Activated naive CD4-positive, alpha-beta T cell treated with anti-CD3 and anti-CD28 coated beads for 36 hours (primary cell): ENCODE measurements at regions of chr11 and their contacts with region 1.

Region 1: GRCh38 chr11:76807206-76807875 is 24.2 kb downstream of the TSKU start:
- DNase-seq: peak; percentile 86
- H3K4me3 Mint-ChIP-seq: no peak overlapping the region
- H3K27ac Mint-ChIP-seq: no peak overlapping the region
- H3K4me1 Mint-ChIP-seq: peaks cover 26% of the 10 kb centered on the region
- H3K27me3 Mint-ChIP-seq: peaks cover 7% of the 10 kb centered on the region

Region 2: DNA sequence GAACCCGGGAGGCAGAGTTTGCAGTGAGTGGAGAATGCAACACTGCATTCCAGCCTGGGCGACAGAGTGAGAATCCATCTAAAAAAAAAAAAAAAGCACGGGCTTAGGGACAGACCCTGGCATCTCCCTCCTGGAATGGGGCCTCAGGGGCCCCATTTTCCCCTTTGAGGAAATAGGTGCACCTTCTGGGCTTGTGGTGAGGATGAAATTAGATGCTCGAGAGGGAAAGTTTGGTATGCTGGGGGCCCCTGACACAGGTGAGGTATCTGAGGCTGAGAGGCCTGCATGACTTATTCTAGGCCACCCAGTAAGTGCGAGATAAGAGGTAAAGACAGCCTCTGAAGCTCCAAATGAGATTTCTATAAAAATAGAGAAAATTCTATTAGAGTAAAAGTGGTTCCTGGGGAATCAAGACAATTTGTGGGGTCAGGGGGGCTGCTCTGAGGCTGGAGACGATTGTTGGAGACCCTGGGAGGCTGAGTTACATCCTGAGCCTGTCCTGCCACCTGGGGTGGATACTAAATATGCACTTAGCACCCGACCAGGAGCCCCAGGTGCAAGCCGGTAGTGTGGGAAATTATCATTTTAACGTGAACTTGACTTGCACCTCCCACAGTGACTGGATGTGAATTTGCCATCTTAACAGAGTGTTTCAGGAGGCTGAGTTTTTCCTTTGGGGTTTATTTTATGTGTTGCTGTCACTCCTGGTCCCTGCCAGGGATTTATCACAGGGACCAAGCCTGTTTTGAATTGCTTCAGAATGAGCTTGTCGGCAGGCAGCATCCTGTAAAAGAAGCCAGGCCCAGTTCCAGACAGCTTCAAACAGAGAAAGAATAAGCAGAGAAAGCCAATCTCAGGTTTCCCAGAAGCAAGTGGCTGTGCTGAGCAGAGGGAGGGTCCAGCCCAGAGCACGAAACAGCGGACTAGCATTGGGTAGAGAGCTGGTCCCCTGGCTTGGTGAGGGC is 72.6 kb before region 1 on chr11:
- CTCF ChIA-PET with region 1: interaction called, 82 read pairs
- intact Hi-C with region 1: no loop called
- DNase-seq: no peak
- H3K4me3 Mint-ChIP-seq: no peak overlapping the region
- H3K27ac Mint-ChIP-seq: no peak overlapping the region
- H3K4me1 Mint-ChIP-seq: no peaks in the 10 kb centered on the region
- H3K27me3 Mint-ChIP-seq: no peaks in the 10 kb centered on the region

Region 3: GRCh38 chr11:76823481-76824078 is 16.2 kb after region 1 on chr11:
- CTCF ChIA-PET with region 1: interaction called, 10 read pairs
- intact Hi-C with region 1: no loop called
- DNase-seq: no peak
- H3K4me3 Mint-ChIP-seq: no peak overlapping the region
- H3K27ac Mint-ChIP-seq: no peak overlapping the region
- H3K4me1 Mint-ChIP-seq: peaks cover 3% of the 10 kb centered on the region
- H3K27me3 Mint-ChIP-seq: peaks cover 3% of the 10 kb centered on the region

Region 4: GRCh38 chr11:76860539-76861475 is 53.5 kb after region 1 on chr11 and contains the start of gene ACER3:
- CTCF ChIA-PET with region 1: interaction called, 3 read pairs
- intact Hi-C with region 1: loop called (anchors 2 kb)
- DNase-seq: peak; percentile 85
- H3K4me3 Mint-ChIP-seq: peak within 1 kb of the TSS; percentile 87
- H3K27ac Mint-ChIP-seq: no peak within 1 kb of the TSS
- H3K4me1 Mint-ChIP-seq: peaks cover 14% of the 10 kb centered on the region
- H3K27me3 Mint-ChIP-seq: no peaks in the 10 kb centered on the region
- total RNA-seq, gene ACER3: 7.6 to 10.0 TPM

Region 5: DNA sequence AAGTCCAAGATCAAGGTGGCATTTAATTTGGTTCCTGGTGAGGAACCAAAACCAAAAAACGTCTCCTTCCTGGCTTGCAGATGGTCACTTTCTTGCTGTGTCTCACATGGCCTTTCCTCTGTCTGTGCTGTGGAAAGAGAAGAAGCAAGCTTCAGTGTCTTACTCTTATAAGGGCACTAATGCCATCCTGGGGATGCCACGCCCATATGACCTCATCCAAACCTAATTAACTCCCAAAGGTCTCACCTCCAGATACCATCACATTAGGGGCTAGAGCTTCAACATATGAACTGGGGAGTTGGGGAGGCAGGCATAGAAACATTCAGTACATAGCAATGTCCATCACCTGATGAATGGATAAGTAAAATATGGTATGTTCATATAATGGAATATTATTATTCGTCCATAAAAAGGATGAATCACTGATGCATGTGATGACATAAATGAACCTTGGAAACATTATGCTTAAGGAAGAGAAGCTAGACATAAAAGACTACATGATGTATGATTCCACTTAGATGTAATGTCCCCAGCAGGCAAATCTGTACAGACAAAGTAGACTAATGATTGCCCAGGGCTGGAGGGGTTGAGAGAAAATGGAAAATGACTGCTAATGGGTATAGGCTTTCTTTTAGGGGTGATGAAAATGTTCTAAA is 148.2 kb after region 1 on chr11:
- CTCF ChIA-PET with region 1: no interaction called
- intact Hi-C with region 1: no loop called
- DNase-seq: no peak
- H3K4me3 Mint-ChIP-seq: no peak overlapping the region
- H3K27ac Mint-ChIP-seq: no peak overlapping the region
- H3K4me1 Mint-ChIP-seq: no peaks in the 10 kb centered on the region
- H3K27me3 Mint-ChIP-seq: no peaks in the 10 kb centered on the region

Region 6: GRCh38 chr11:77400773-77401449 is 593.6 kb after region 1 on chr11:
- CTCF ChIA-PET with region 1: no interaction called
- intact Hi-C with region 1: no loop called
- DNase-seq: no peak
- H3K4me3 Mint-ChIP-seq: no peak overlapping the region
- H3K27ac Mint-ChIP-seq: no peak overlapping the region
- H3K4me1 Mint-ChIP-seq: peaks cover 22% of the 10 kb centered on the region
- H3K27me3 Mint-ChIP-seq: no peaks in the 10 kb centered on the region